Left cardiac atrium (tissue), 4 donors: ENCODE measurements at regions of chr20 and their contacts with region 1.

Region 1: DNA sequence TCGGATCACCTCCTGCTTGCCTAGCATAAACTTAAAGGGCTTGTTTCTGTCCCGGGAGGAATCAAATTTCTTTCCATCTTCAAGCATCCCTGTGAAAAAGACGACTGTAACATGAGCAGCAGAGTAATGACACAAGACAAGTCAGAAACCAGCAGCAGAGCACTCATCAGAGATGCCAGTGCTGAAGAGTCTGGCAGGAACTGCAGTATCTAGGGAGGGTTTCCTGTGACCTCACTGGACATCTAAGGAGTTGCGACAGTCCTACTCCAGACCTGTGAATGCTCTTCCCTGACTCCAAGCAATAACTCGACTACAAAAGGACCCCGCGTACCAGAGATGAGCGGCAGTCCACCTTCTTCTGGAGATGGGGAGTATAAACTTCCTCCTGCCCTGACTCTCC is 17.3 kb downstream of the FKBP1A start:
- DNase-seq: no peak
- ATAC-seq: peak; percentile 33 to 55

Region 2: GRCh38 chr20:1336699-1337367 is 38.7 kb before region 1 on chr20:
- intact Hi-C with region 1: loop called in 1 of 2 experiments (anchors 5 kb)
- DNase-seq: peak; percentile 89
- ATAC-seq: peak; percentile 91 to 93